ENCODE measurements at regions of chr18 and their contacts with region 1.

Region 1: GRCh38 chr18:75209129-75209950 is at the start of gene PTGR3:
- DNase-seq: peak; percentile 92
- ATAC-seq: peak; percentile 76
- H3K4me3 ChIP-seq: peak within 1 kb of the TSS; percentile 70 to 94
- H3K27ac ChIP-seq: peak within 1 kb of the TSS; percentile 81 to 98
- H3K4me1 ChIP-seq: peaks cover 0 to 4% of the 10 kb centered on the region in 2 donors
- H3K27me3 ChIP-seq: no peaks in the 10 kb centered on the region
- total RNA-seq, gene PTGR3: 16.9 to 28.6 TPM

Region 2: DNA sequence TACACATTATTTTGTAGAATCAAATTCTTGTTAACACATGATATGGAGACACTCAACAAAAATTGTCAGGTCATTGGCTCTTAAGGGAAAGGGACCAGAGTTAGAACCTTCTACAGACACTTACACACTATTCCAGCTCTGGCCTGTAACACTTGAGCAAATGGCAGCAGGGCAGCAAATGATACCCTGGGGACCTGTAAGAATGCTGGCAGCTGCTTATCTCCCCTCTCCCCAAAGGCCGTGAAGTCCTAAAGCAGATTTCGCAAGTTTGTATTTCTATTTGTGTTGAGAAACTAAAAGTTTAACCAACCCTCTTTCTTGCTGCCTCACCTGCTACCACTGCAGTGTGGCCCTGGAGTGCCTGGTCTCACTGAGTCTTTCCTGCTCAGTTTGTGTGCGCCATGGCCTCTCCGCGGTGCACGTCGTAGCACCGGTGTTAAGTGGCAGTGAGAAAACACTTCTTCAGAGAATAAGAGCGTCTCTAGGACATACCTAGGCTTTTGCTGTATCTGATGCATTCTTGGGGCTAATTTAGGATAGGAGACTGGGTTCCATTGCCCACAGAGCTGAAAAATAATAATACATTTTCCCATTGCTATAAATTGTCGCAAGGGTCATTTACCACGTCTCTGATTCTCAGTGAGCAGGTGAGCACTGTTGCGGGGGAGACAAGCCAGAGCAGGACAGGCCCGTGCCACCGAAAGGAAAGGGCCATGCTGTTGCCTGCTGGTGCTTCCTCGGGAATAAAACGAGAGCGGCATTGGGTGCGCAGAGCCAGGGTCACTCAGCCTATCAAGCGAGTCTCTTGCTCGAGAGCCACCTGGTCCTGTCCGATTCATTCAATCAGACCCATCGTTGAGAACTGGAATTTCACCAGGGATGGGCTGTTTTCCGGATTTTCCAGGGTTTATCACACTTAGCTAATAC is 205.3 kb before region 1 on chr18:
- intact Hi-C with region 1: loop called in 1 of 2 experiments (anchors 10 kb)
- DNase-seq: no peak
- ATAC-seq: peak; percentile 72
- H3K4me3 ChIP-seq: no peak overlapping the region
- H3K27ac ChIP-seq: peak overlapping the region; percentile 8 to 55
- H3K4me1 ChIP-seq: peaks cover 4% of the 10 kb centered on the region in 2 donors
- H3K27me3 ChIP-seq: no peaks in the 10 kb centered on the region

Region 3: DNA sequence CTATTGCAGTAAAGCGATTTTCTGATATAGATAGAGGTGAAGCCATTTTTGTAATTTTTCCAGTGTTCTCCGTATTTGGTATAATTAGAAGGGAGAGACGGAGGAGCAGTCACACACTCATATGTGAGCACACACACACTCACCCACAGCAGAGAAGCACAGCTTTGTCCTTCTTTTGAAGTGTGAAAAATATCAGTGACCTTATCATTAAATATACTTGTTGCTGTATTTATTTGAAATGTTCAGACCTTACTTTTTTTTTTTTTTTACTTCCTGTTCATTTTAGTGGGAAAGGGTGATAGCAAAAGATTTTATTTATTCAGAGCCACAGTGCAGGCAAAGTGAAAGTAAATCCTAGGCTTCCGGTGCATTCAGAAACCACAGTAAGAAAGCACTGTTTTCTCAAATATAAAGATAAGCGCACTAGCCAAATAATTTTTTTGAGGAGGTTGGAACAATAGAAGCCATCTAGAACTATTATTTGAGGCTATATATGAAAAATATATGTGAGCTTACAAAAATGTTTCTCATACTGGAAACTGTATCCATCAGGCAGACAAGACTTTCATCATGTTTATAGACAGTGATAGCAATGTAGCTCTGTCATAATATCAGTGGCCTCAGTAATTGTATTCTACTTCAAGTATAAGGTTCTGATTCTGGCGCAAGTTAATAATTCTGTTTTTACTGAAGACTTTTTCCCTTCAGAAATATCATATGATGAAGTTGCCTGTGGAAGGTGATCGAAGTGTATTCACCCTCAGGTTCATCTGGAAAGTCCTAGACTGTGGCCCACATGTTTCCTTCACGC is 38.5 kb after region 1 on chr18:
- intact Hi-C with region 1: loop called in 1 of 2 experiments (anchors 5 kb)
- DNase-seq: no peak
- ATAC-seq: no peak
- H3K4me3 ChIP-seq: peak overlapping the region; percentile 35 to 61
- H3K27ac ChIP-seq: no peak overlapping the region
- H3K4me1 ChIP-seq: no peaks in the 10 kb centered on the region
- H3K27me3 ChIP-seq: no peaks in the 10 kb centered on the region

Measured in aorta (tissue), 5 donors.